ENCODE measurements at regions of chr7 and their contacts with region 1.

Region 1: DNA sequence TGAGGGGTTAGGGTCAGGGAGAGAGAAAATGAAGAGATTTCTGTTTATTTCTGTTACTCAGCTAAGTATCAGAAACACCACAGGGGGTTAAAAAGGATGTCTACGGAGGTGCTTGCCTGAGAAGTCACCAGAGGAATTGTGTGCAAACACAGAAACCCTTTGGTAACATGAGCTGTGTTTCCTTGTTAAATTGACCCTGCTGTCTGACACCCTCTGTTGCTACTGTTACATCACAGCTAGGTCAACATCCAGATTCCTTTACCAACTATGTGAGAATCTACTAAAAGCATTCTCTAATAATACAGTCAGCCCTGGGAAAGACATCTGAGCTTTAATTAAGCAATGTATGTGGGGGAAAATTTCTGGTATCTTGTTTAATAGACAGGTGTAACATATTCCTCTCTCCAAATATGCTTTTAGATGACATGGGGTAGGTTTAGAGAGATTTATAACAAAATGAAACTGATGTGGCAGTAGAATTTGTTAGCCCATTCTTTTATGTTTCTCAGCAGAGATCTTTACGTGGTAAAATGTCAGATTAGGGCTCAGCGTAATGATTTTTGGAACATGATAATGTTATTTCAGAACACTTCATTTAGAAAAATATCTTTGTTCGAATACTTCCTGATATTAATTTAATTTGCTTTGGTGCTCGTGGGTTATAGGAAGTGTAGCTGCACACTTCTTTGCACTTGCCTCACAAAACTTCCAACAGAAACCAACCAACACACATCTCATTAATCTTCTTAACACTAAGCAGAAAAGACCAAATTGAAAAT is 168.0 kb upstream of the AHR start:
- DNase-seq: no peak
- H3K4me3 Mint-ChIP-seq: no peak overlapping the region
- H3K27ac Mint-ChIP-seq: no peak overlapping the region
- H3K4me1 Mint-ChIP-seq: peaks cover 38% of the 10 kb centered on the region
- H3K27me3 Mint-ChIP-seq: peaks cover 2% of the 10 kb centered on the region

Region 2: DNA sequence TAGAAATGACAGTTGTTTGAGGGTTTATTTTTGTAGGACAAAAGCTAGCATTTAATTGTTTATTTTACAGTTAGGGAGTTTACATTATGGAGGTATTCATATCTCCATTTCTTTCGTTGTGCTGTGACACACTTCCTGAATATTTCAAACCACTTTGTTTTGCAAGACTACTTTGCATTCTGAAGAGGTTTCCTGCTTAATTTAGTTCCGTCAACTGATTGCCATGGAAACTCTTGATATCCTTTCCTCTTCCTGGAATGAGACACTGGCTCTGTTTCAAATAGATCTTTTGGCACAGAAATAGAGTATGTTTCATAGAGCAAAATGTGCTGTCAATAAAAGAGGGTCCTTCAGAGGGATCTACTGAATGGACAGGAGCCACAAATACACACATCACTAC is 89.1 kb before region 1 on chr7:
- CTCF ChIA-PET with region 1: no interaction called
- POLR2A ChIA-PET with region 1: no interaction called
- intact Hi-C with region 1: loop called (anchors 5 kb)
- DNase-seq: no peak
- H3K4me3 Mint-ChIP-seq: no peak overlapping the region
- H3K27ac Mint-ChIP-seq: no peak overlapping the region
- H3K4me1 Mint-ChIP-seq: peaks cover 26% of the 10 kb centered on the region
- H3K27me3 Mint-ChIP-seq: peaks cover 1% of the 10 kb centered on the region

Region 3: DNA sequence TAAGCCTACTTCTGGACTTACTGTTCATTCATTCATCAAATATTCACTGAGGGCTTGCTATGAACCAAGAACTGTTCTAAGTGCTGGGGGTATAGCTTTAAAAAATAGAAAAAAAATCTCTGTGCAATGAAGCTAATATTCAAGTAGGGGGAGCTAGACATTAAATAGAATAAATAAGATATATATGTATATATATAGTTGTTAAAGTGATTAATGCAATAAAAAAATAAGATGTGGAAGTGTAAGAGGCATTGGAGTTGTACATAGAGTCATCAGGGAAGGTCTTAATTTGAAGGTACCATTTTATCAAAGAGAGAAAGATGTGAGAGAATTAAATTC is 67.5 kb before region 1 on chr7:
- CTCF ChIA-PET with region 1: no interaction called
- POLR2A ChIA-PET with region 1: no interaction called
- intact Hi-C with region 1: loop called (anchors 5 kb)
- DNase-seq: no peak
- H3K4me3 Mint-ChIP-seq: no peak overlapping the region
- H3K27ac Mint-ChIP-seq: no peak overlapping the region
- H3K4me1 Mint-ChIP-seq: peaks cover 14% of the 10 kb centered on the region
- H3K27me3 Mint-ChIP-seq: no peaks in the 10 kb centered on the region

Region 4: DNA sequence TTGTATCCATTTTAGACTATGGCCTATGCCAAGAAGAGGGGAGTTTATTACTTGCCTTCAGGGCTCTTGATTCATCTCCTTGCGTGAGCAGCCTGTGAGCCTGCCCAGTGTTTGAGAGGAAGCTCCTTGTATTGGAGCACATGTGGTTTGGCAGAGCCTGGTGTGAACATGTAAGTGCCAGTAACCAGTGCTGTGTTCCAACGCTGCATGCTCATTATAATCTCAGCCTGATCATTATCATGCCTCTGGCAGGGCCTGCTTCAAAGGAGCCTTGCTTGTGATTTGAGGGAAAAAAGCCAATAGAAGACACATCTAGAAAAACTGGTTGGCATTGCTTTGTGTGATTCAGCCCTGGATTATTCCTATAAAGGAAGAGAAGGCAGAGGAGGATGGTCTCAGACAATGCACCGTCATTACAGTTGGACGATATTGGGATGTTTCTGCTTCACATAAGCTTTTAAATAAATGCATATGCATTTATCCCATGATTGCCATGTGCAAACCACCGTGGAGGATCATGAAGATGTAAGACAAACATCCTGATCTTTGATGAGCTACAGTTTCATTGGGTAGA is 35.4 kb before region 1 on chr7:
- CTCF ChIA-PET with region 1: no interaction called
- POLR2A ChIA-PET with region 1: no interaction called
- intact Hi-C with region 1: no loop called
- DNase-seq: no peak
- H3K4me3 Mint-ChIP-seq: no peak overlapping the region
- H3K27ac Mint-ChIP-seq: no peak overlapping the region
- H3K4me1 Mint-ChIP-seq: peaks cover 8% of the 10 kb centered on the region
- H3K27me3 Mint-ChIP-seq: peaks cover 2% of the 10 kb centered on the region

Region 5: DNA sequence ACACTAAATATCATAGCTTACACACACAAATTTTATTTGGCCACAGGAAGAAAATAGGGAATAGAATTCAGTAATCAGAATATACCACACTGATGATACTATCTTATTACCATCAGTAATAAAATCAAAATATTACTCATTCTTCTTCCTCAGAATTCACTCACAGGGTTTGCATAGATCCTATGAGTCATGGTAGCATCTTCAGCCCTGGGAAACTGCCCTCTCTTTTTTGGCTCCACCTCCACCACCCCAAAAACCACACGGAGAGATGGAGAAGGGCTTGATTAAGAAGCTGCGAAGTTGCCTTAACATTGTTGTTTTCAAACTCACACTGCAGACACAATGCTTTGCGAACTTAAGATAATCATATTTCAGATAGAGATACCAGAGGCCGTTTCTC is 13.9 kb after region 1 on chr7:
- CTCF ChIA-PET with region 1: no interaction called
- POLR2A ChIA-PET with region 1: no interaction called
- intact Hi-C with region 1: loop called (anchors 1 kb)
- DNase-seq: peak; percentile 83
- H3K4me3 Mint-ChIP-seq: peak overlapping the region; percentile 43
- H3K27ac Mint-ChIP-seq: peak overlapping the region; percentile 53
- H3K4me1 Mint-ChIP-seq: peaks cover 46% of the 10 kb centered on the region
- H3K27me3 Mint-ChIP-seq: peaks cover 2% of the 10 kb centered on the region

Region 6: GRCh38 chr7:17185690-17186070 is 55.2 kb after region 1 on chr7:
- CTCF ChIA-PET with region 1: no interaction called
- POLR2A ChIA-PET with region 1: no interaction called
- intact Hi-C with region 1: no loop called
- DNase-seq: no peak
- H3K4me3 Mint-ChIP-seq: no peak overlapping the region
- H3K27ac Mint-ChIP-seq: no peak overlapping the region
- H3K4me1 Mint-ChIP-seq: peaks cover 11% of the 10 kb centered on the region
- H3K27me3 Mint-ChIP-seq: no peaks in the 10 kb centered on the region

Region 7: GRCh38 chr7:17940302-17940883 is 809.9 kb after region 1 on chr7 and contains the start of gene SNX13:
- CTCF ChIA-PET with region 1: no interaction called
- POLR2A ChIA-PET with region 1: no interaction called
- intact Hi-C with region 1: loop called (anchors 10 kb)
- DNase-seq: peak; percentile 92
- H3K4me3 Mint-ChIP-seq: peak within 1 kb of the TSS; percentile 98
- H3K27ac Mint-ChIP-seq: peak within 1 kb of the TSS; percentile 94
- H3K4me1 Mint-ChIP-seq: peaks cover 40% of the 10 kb centered on the region
- H3K27me3 Mint-ChIP-seq: no peaks in the 10 kb centered on the region
- total RNA-seq, gene SNX13: 18.6 to 19.8 TPM